Common myeloid progenitor, CD34-positive (primary cell): ENCODE measurements at regions of chr11 and their contacts with region 1.

Region 1: DNA sequence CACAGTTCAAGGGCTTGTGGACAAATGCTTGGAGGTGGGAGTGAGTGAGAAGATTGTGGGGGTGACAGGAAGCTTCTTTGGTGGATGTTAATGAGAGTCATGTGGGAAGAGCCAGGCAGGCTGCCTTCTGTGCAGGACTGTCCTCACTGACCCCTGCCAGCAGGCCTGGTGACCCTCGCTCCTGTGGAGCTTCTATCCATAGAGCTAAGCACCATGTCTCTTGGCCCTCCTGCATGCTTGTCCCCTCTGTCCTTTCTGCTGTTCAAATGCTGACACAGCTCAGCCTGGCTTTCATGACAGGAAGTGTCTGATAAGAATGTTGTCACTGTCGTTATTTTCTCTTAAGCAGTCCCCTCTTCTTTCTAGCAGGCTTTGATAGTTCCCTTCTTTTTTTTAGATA is 37.6 kb downstream of the NAT10 start:
- DNase-seq: no peak
- H3K4me3 ChIP-seq: no peak overlapping the region
- H3K27ac ChIP-seq: no peak overlapping the region
- H3K4me1 ChIP-seq: no peaks in the 10 kb centered on the region
- H3K27me3 ChIP-seq: no peaks in the 10 kb centered on the region

Region 2: GRCh38 chr11:33893711-33894397 is 249.2 kb before region 1 on chr11:
- CTCF ChIA-PET with region 1: no interaction called
- POLR2A ChIA-PET with region 1: no interaction called
- DNase-seq: peak; percentile 93 to 99 (median 98)
- H3K4me3 ChIP-seq: peak overlapping the region in 6 of 7 experiments; percentile 43 to 85 (median 60)
- H3K27ac ChIP-seq: peak overlapping the region; percentile 71 to 91
- H3K4me1 ChIP-seq: peaks cover 48 to 98% (median 88%) of the 10 kb centered on the region in 4 experiments
- H3K27me3 ChIP-seq: no peaks in the 10 kb centered on the region

Region 3: DNA sequence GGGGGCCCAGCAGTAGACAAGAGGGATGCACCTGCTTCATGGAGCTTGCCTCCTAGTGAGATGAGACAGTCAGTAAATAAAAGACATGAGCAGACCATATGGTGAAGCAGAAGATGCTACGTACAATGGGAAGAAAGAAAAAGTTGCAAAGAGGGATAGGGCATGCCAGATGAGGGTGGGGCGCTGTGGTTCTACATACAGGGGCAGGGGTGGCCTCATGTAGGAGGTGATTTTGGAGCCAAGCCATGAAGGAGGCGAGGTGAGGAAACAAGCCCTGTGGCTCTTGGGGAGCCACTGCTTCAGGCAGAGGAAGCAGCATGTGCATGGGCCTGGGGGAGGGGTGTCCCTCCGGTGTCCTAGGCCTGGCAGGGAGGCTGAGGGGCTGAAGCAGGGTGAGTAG is 22.4 kb before region 1 on chr11:
- CTCF ChIA-PET with region 1: no interaction called
- POLR2A ChIA-PET with region 1: no interaction called
- DNase-seq: no peak
- H3K4me3 ChIP-seq: no peak overlapping the region
- H3K27ac ChIP-seq: no peak overlapping the region
- H3K4me1 ChIP-seq: no peaks in the 10 kb centered on the region
- H3K27me3 ChIP-seq: no peaks in the 10 kb centered on the region

Region 4: GRCh38 chr11:34154059-34154875 is 11.2 kb after region 1 on chr11:
- CTCF ChIA-PET with region 1: interaction called, 20 read pairs
- POLR2A ChIA-PET with region 1: no interaction called
- DNase-seq: peak; percentile 27 to 68 (median 65)
- H3K4me3 ChIP-seq: peak overlapping the region in 2 of 7 experiments; percentile 0 to 57
- H3K27ac ChIP-seq: no peak overlapping the region
- H3K4me1 ChIP-seq: peaks cover 4 to 45% (median 36%) of the 10 kb centered on the region in 4 experiments
- H3K27me3 ChIP-seq: no peaks in the 10 kb centered on the region